GM10248 (cell line): ENCODE measurements at regions of chr19 and their contacts with region 1.

Region 1: DNA sequence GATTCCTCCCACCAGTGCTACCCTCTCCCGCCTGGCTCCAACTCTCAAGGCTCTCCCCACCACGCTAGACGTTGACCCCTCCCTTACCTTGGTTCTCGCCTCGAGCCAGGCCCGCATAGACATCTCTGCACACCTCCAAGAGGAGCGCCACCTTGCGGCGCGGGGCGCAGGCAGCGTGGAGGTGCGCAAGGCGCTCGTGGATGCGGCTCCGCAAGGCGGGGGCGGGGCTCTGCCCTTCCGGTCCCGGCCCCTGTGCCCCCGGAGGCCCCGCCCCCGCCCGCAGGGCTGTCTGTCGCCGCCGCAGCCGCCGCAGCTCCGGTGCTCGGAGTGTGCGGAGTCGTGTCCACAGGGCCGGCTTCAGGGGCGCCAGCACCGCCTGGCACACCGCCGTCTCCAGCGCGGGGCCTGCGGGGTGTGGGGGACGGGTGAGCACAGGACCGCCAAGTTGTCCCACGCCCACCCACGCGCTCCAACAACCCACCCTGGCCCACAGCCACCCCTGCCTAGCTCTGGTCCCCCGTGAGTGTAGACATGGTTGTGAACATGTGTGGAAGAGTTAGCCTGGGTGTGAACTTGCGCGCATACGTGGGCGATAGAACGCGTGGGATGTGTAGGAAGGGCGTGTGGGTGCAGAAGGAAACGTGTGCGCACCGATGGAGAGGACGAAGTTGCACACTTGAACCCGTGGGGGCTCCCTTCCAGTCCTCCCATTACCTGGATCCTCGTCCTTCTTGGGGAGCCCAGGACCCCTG is 8.0 kb downstream of the RINL start:
- DNase-seq: peak; percentile 92
- CTCF ChIP-seq: peak; percentile 99

Region 2: GRCh38 chr19:38812841-38813320 is 57.2 kb before region 1 on chr19 and contains the start of gene LGALS4:
- CTCF ChIA-PET with region 1: no interaction called
- POLR2A ChIA-PET with region 1: no interaction called
- DNase-seq: no peak
- CTCF ChIP-seq: no peak

Region 3: GRCh38 chr19:38856813-38857212 is 13.2 kb before region 1 on chr19:
- CTCF ChIA-PET with region 1: interaction called, 19 read pairs
- POLR2A ChIA-PET with region 1: no interaction called
- DNase-seq: no peak
- CTCF ChIP-seq: no peak

Region 4: GRCh38 chr19:38942471-38943181 is 72.6 kb after region 1 on chr19:
- CTCF ChIA-PET with region 1: no interaction called
- POLR2A ChIA-PET with region 1: no interaction called
- DNase-seq: peak; percentile 3
- CTCF ChIP-seq: no peak